ENCODE measurements at regions of chr3 and their contacts with region 1.

Region 1: DNA sequence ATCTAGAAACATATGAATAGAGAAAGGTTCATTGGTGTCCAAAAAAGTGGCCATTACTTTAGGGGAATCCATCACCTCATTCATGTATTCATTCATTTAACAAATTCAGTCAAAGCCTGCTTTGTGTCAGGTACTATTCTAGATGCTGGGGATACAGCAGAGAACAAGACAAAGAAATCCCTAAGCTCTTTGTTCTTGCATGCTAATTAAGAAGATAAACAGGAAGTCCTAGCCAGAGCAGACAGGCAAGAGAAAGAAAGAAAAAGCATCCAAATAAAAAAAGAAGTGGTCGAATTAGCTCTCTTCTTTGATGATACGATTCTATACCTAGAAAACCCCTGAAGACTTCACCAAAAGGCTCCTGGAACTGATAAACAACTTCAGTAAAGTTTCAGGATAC is 12.4 kb upstream of the ZMAT3 start:
- DNase-seq: no peak
- H3K4me3 ChIP-seq: no peak overlapping the region
- H3K4me3 Mint-ChIP-seq: peak overlapping the region; percentile 3 to 68 (median 55)
- H3K27ac ChIP-seq: no peak overlapping the region
- H3K27ac Mint-ChIP-seq: peak overlapping the region in 6 of 7 donors; percentile 4 to 85 (median 53)
- H3K4me1 ChIP-seq: peaks cover 13% of the 10 kb centered on the region
- H3K4me1 Mint-ChIP-seq: peaks cover 10 to 11% (median 10%) of the 10 kb centered on the region in 4 donors
- H3K27me3 ChIP-seq: no peaks in the 10 kb centered on the region
- H3K27me3 Mint-ChIP-seq: no peaks in the 10 kb centered on the region

Region 2: GRCh38 chr3:179037351-179037750 is 46.6 kb before region 1 on chr3:
- CTCF ChIA-PET with region 1: no interaction called
- POLR2A ChIA-PET with region 1: interaction called, 11 read pairs
- intact Hi-C with region 1: no loop called
- DNase-seq: peak; percentile 61 to 71 (median 65)
- H3K4me3 ChIP-seq: peak overlapping the region in 1 of 2 donors; percentile 27
- H3K4me3 Mint-ChIP-seq: peak overlapping the region in 7 of 8 donors; percentile 47 to 79 (median 75)
- H3K27ac ChIP-seq: peak overlapping the region; percentile 24
- H3K27ac Mint-ChIP-seq: peak overlapping the region in 1 of 7 donors; percentile 90
- H3K4me1 ChIP-seq: peaks cover 43% of the 10 kb centered on the region
- H3K4me1 Mint-ChIP-seq: peaks cover 11 to 23% (median 15%) of the 10 kb centered on the region in 4 donors
- H3K27me3 ChIP-seq: no peaks in the 10 kb centered on the region
- H3K27me3 Mint-ChIP-seq: no peaks in the 10 kb centered on the region

Region 3: DNA sequence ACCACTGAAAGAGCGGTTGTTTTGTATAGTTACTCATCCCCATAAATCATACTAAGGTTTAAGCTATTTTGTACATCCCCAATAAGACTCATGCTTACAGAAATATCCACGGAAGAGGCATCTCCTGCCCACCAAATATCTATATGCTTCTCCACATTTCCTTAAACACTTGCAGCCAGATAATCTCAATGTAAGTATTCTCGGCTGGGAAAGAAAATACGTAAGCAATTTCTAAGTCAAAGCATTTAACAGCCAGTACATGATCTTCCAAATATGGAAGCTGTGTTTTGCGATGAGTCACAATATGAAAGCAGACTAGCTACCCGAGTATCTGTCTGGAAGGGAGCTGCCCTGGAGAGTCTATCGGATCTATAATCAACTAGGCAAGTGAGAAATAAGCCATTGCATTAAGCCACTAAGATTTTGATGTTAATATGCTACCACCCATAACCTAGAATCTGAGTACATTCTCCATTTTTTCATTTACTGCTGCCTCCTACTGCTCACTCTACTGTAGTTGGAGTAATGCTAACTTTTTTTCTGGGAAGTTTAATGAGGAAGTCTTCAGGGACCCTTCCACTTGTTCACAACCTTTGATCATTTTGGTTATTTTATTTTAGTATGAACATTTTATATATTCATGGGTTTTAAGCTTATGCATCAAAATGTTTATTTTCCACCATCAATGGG is 14.6 kb after region 1 on chr3:
- CTCF ChIA-PET with region 1: interaction called, 15 read pairs
- POLR2A ChIA-PET with region 1: no interaction called
- intact Hi-C with region 1: no loop called
- DNase-seq: no peak
- H3K4me3 ChIP-seq: no peak overlapping the region
- H3K4me3 Mint-ChIP-seq: no peak overlapping the region
- H3K27ac ChIP-seq: no peak overlapping the region
- H3K27ac Mint-ChIP-seq: no peak overlapping the region
- H3K4me1 ChIP-seq: no peaks in the 10 kb centered on the region
- H3K4me1 Mint-ChIP-seq: peaks cover 0 to 3% (median under 1%) of the 10 kb centered on the region in 4 donors
- H3K27me3 ChIP-seq: no peaks in the 10 kb centered on the region
- H3K27me3 Mint-ChIP-seq: peaks cover 0 to 3% of the 10 kb centered on the region in 2 donors

Region 4: GRCh38 chr3:179347345-179348194 is 263.6 kb after region 1 on chr3 and contains the start of gene MFN1:
- CTCF ChIA-PET with region 1: no interaction called
- POLR2A ChIA-PET with region 1: no interaction called
- intact Hi-C with region 1: no loop called
- DNase-seq: peak; percentile 86 to 94 (median 89)
- H3K4me3 ChIP-seq: peak within 1 kb of the TSS; percentile 92 to 97
- H3K4me3 Mint-ChIP-seq: peak within 1 kb of the TSS; percentile 93 to 100 (median 98)
- H3K27ac ChIP-seq: peak within 1 kb of the TSS; percentile 72
- H3K27ac Mint-ChIP-seq: peak within 1 kb of the TSS; percentile 86 to 99 (median 95)
- H3K4me1 ChIP-seq: peaks cover 21% of the 10 kb centered on the region
- H3K4me1 Mint-ChIP-seq: peaks cover 16 to 31% (median 24%) of the 10 kb centered on the region in 4 donors
- H3K27me3 ChIP-seq: no peaks in the 10 kb centered on the region
- H3K27me3 Mint-ChIP-seq: no peaks in the 10 kb centered on the region
- total RNA-seq, gene MFN1: 52.0 to 58.3 TPM

Measured in CD4-positive, alpha-beta memory T cell (primary cell).